Activated CD4-positive, alpha-beta T cell treated with anti-CD3 and anti-CD28 coated beads, Interleukin-2, amount 10 ng/mL, durations not matched to agents 24 days and 14 days (primary cell): ENCODE measurements at regions of chr7 and their contacts with region 1.

Region 1: DNA sequence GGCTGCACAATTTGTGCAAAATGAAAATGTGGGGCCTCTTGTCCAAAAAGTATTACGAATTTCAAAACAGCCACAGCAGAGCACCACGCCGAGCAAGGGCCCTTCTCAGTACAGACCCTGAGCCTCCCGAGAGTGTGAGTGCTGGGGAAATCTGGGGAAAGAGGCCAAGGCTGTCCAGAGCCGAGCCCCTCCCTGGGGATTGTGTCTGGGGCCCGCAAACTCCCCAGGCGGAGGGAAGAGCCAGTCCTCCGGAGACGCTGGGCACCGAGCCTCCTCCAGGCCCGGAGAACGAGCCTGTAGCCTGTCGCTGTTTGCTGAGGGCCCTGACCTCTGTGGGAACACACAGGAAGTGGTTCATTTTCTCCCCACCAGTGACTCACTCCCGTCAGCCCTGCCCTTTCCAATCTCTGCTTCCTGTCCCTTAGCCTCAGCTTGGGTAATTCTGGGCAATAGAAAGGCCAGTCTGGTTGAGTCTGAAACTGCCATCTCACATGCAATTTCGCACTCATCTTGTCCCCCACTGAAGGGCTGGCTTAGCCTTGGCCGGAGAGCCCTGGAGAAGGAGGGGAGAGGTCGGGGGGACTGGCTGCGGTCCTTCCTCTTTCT is 19.5 kb upstream of the GNA12 start:
- DNase-seq: peak; percentile 92
- H3K4me3 Mint-ChIP-seq: peak overlapping the region; percentile 73
- H3K27ac Mint-ChIP-seq: peak overlapping the region; percentile 86
- H3K4me1 Mint-ChIP-seq: peaks cover 29% of the 10 kb centered on the region
- H3K27me3 Mint-ChIP-seq: no peaks in the 10 kb centered on the region

Region 2: DNA sequence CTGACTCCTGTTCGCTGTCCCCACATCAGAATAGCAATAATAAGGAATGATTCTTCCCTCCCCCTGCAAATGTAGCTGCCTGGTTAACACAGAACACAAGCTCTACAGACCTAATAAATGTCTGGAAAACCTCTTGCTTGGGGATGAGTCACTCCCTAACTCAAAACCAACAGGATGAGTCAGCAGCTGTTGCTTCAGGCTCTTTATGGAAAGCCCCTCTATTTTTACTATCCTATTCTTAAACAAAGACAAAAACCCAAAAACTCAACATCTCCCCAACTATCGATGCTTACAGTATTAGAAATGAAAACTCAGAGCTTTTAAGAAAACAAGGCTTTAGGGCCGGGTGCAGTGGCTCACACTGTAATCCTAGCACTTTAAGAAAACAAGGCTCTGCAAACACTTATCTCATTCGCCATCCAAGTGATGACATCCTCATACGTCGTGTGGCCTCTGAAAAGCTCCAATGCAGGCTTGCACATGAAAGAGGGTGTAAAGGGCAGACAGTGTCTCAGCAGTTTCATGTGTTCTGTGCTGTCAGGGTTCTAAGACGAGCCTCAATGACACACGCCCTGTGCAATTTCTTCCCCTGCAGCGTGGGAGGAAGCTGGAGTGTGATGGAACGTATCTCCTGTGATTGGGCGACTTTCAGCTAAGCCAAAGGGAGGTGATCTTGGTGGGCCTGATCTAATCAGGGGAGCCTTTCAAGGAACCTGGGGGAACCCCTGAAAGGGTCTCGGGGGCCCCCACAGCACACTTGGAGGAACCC is 105.5 kb before region 1 on chr7:
- intact Hi-C with region 1: loop called (anchors 1 kb)
- DNase-seq: peak; percentile 90
- H3K4me3 Mint-ChIP-seq: peak overlapping the region; percentile 56
- H3K27ac Mint-ChIP-seq: peak overlapping the region; percentile 95
- H3K4me1 Mint-ChIP-seq: peaks cover 41% of the 10 kb centered on the region
- H3K27me3 Mint-ChIP-seq: no peaks in the 10 kb centered on the region

Region 3: DNA sequence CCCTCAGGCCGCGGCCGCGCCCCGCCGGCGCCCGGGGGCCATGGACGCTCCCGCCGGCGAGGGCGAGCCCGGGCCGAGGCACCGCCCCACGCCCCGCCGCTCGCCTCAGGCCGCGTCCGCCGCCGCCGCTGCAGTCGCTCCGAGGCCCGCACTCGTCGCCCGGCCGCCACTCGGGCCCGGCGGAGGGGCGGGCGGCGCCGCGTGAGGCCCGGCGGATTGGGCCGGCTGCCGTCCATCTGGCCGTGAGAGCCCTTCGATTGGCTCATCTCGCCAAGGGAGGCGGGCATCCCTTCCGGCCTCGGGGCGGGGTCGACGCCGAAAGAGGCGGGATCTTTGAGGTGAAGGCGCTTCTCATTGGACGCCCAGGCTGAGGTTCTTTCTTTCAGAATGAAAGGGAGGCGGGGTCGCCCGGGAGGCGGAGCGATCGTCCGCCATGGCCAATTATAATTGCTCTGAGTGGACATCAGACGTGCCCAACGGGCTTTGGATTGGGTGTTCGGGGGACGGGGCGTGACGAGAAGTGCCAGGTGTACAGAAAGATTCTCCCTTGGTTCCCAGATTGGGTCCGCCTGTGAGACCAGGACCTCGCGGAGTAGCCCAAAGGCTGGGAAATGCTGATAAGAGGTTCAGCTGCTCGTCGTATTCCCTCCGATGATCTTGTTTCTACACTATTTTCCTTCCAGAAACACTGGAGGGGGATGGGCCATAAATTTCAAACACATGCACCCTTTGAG is 19.2 kb before region 1 on chr7 and contains the start of gene GNA12:
- intact Hi-C with region 1: loop called (anchors 2 kb)
- DNase-seq: peak; percentile 100
- H3K4me3 Mint-ChIP-seq: peak within 1 kb of the TSS; percentile 85
- H3K27ac Mint-ChIP-seq: peak within 1 kb of the TSS; percentile 71
- H3K4me1 Mint-ChIP-seq: peaks cover 39% of the 10 kb centered on the region
- H3K27me3 Mint-ChIP-seq: no peaks in the 10 kb centered on the region
- total RNA-seq, gene GNA12: 30.6 and 31.0 TPM in 2 replicates

Region 4: DNA sequence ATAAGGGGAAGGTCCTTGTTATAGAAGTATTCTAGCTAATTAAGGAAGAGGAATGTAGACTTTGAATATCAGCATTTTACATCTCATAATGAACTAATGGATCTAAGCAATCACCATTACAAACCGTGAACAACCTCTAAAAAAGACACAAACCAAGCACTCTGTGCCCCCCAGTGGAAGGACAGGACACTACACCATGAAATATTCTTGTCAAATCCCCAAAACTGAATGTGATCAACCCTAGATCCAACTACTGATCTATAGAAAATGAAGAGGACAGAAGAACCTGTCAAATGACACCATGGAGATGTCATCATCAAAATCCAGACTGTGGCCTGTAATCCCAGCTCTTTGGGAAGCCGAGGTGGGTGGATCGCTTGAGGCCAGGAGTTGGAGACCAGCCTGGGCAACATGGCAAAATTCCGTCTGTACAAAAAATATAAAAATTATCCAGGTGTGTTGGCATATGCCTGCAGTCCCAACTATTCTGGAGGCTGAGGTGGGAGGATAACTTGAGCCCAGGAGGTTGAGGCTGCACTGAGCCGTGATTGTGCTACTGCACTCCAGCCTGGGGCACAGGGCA is 291.4 kb after region 1 on chr7:
- intact Hi-C with region 1: loop called (anchors 1 kb)
- DNase-seq: peak; percentile 89
- H3K4me3 Mint-ChIP-seq: no peak overlapping the region
- H3K27ac Mint-ChIP-seq: no peak overlapping the region
- H3K4me1 Mint-ChIP-seq: peaks cover 18% of the 10 kb centered on the region
- H3K27me3 Mint-ChIP-seq: peaks cover 4% of the 10 kb centered on the region

Region 5: GRCh38 chr7:3300651-3301378 is 437.3 kb after region 1 on chr7 and contains the start of gene SDK1:
- intact Hi-C with region 1: loop called (anchors 2 kb)
- DNase-seq: peak; percentile 97
- H3K4me3 Mint-ChIP-seq: peak within 1 kb of the TSS; percentile 62
- H3K27ac Mint-ChIP-seq: no peak within 1 kb of the TSS
- H3K4me1 Mint-ChIP-seq: peaks cover 12% of the 10 kb centered on the region
- H3K27me3 Mint-ChIP-seq: peaks cover 56% of the 10 kb centered on the region
- total RNA-seq, gene SDK1: 0.14 and 0.16 TPM in 2 replicates